K562 (cell line): ENCODE measurements at regions of chr21 and their contacts with region 1.

Region 1: DNA sequence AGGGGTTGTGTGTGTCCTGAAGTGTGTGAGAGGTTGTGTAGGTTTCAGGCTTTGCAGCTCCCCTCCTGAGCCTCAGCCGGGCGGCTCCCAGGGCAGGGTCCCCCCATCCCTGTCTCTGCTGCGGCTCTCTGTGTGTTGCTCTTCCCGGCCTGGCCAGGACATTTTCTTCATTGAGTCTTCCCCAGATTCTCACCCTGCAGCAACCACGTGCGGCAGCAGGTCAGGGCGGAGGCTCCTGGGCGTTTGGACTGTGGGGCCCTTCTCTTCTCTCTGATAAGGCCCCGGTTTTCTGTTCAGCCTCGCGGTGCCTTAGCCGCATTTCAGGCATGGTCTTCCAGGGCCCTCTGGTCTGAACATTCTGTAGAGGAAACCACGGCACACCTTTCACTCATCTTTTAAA is 1.8 kb upstream of the TCP10L start:
- DNase-seq: peak; percentile 56 to 77 (median 62)
- ATAC-seq: peak; percentile 67
- H3K4me3 ChIP-seq: no peak overlapping the region
- H3K27ac ChIP-seq: no peak overlapping the region; the same call in 2 of the 3 replicates
- H3K4me1 ChIP-seq: peaks cover 13 to 17% of the 10 kb centered on the region in 2 experiments; a peak in 4 of 5 replicates
- H3K27me3 ChIP-seq: peaks cover 9 to 17% of the 10 kb centered on the region in 2 experiments; a peak in 4 of 5 replicates
- CTCF ChIP-seq: no peak
- EP300 ChIP-seq: no peak
- POLR2A ChIP-seq: no peak
- RAD21 ChIP-seq: no peak

Region 2: DNA sequence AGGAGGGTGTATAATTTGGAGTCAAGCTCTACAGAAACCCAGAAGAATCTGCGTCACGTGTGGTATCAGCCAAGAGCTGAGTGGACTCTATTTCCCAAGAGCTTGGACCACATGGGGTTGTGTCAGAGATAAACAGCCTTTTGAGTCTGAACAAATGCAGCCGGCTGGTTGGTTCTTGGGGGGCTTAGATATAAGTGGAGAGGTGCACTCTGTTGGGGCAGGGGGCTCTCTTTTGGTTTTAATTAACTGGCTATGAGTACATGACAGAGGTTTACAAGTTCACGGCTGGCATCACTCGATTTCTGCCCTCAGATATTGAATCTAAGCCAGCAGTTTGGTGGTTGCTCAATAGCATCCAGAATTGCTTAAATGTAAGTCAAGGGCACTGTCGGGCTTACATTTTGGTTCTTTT is 289.0 kb before region 1 on chr21:
- CTCF ChIA-PET with region 1: no interaction called
- POLR2A ChIA-PET with region 1: no interaction called
- in situ Hi-C with region 1: no loop called
- intact Hi-C with region 1: loop called (anchors 10 kb)
- DNase-seq: no peak
- ATAC-seq: no peak
- H3K4me3 ChIP-seq: no peak overlapping the region
- H3K27ac ChIP-seq: no peak overlapping the region
- H3K4me1 ChIP-seq: peaks cover 2 to 11% of the 10 kb centered on the region in 2 experiments; a peak in 4 of 5 replicates
- H3K27me3 ChIP-seq: no peaks in the 10 kb centered on the region
- CTCF ChIP-seq: no peak
- EP300 ChIP-seq: no peak
- POLR2A ChIP-seq: no peak
- RAD21 ChIP-seq: no peak

Region 3: DNA sequence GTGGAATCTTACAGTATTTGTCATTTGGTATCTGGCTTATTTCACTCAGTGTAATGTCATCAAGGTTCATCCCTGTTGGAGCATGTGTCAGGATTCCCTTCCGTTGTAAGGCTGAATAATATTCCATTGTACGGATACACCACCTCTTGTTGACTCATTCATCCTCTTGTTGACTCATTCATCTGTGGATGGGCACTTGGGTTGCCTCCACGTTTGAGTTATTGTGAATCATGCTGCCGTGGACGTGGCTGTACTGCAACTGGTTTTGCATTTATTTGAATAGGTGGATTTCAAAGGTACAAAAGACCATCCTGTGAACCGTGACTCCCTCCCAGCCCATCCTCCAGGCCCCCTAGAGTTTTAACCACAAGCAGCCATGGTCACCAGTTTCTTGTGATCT is 10.1 kb after region 1 on chr21:
- CTCF ChIA-PET with region 1: interaction called, 5 read pairs
- POLR2A ChIA-PET with region 1: interaction called, 12 read pairs
- in situ Hi-C with region 1: no loop called
- intact Hi-C with region 1: no loop called
- DNase-seq: no peak
- ATAC-seq: no peak
- H3K4me3 ChIP-seq: no peak overlapping the region
- H3K27ac ChIP-seq: no peak overlapping the region
- H3K4me1 ChIP-seq: no peaks in the 10 kb centered on the region
- H3K27me3 ChIP-seq: no peaks in the 10 kb centered on the region
- CTCF ChIP-seq: no peak
- EP300 ChIP-seq: no peak
- POLR2A ChIP-seq: no peak
- RAD21 ChIP-seq: no peak

Region 4: GRCh38 chr21:32819694-32820093 is 232.6 kb after region 1 on chr21:
- CTCF ChIA-PET with region 1: no interaction called
- POLR2A ChIA-PET with region 1: no interaction called
- in situ Hi-C with region 1: no loop called
- intact Hi-C with region 1: no loop called
- DNase-seq: no peak
- ATAC-seq: no peak
- H3K4me3 ChIP-seq: no peak overlapping the region
- H3K27ac ChIP-seq: no peak overlapping the region
- H3K4me1 ChIP-seq: no peaks in the 10 kb centered on the region
- H3K27me3 ChIP-seq: peaks cover 7 to 15% of the 10 kb centered on the region in 2 experiments; a peak in 3 of 5 replicates
- CTCF ChIP-seq: no peak
- EP300 ChIP-seq: no peak
- POLR2A ChIP-seq: no peak
- RAD21 ChIP-seq: no peak

Region 5: GRCh38 chr21:32861866-32862265 is 274.7 kb after region 1 on chr21:
- CTCF ChIA-PET with region 1: no interaction called
- POLR2A ChIA-PET with region 1: no interaction called
- in situ Hi-C with region 1: no loop called
- intact Hi-C with region 1: no loop called
- DNase-seq: no peak
- ATAC-seq: no peak
- H3K4me3 ChIP-seq: no peak overlapping the region
- H3K27ac ChIP-seq: no peak overlapping the region
- H3K4me1 ChIP-seq: no peaks in the 10 kb centered on the region
- H3K27me3 ChIP-seq: peaks cover 6 to 12% of the 10 kb centered on the region in 2 experiments; a peak in 2 of 5 replicates
- CTCF ChIP-seq: no peak
- EP300 ChIP-seq: no peak
- POLR2A ChIP-seq: no peak
- RAD21 ChIP-seq: no peak